ENCODE measurements at regions of chr17 and their contacts with region 1.

Region 1: DNA sequence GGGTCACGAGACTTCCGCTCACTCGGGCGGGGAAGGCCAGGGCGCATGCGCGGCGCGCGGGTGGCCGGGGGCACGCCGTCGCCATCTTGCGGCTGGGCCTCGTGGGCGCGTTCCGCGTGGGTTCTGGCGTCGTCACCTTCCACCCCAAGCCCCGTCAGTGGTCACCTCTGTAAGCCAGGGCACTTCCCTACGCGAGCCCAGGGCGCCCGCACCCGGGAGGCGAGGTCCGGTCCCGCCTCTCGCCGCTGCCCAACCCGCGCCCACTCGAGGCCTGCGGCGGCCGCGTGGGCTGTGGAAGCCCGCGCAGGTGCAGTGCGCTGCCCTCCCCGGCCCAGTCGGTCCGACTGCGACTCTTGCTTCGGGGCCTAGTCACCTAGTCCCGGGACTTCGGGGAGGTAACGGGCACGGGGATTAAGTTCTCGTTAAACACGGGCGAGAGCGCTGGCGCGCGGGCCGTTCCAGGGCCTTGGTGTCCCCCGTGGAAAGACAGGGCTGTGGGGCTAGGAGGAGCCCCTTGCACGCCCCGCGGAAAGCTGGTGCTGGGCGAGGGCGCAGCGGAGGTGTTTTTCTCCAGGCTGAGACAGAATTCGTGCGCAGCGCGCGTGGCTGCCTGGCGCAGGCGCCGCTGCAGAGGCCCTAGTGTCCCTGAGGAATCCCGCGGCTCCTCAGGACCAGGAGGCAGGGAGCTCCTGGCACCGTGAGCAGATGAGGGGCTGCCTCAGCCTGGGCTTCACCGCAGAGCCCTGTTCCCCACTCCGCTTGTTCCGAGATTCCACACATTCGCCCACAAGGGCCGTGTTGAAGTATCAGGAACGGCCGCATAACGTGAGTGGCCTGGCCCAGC is 472 bp upstream of the ARHGDIA start:
- DNase-seq: peak; percentile 91 to 98 (median 95)
- ATAC-seq: peak; percentile 41 to 53
- H3K4me3 Mint-ChIP-seq: peak overlapping the region; percentile 83 to 94 (median 87)
- H3K27ac Mint-ChIP-seq: peak overlapping the region; percentile 88 to 98 (median 95)
- H3K4me1 Mint-ChIP-seq: peaks cover 11 to 46% (median 36%) of the 10 kb centered on the region in 4 donors
- H3K27me3 Mint-ChIP-seq: no peaks in the 10 kb centered on the region

Region 2: DNA sequence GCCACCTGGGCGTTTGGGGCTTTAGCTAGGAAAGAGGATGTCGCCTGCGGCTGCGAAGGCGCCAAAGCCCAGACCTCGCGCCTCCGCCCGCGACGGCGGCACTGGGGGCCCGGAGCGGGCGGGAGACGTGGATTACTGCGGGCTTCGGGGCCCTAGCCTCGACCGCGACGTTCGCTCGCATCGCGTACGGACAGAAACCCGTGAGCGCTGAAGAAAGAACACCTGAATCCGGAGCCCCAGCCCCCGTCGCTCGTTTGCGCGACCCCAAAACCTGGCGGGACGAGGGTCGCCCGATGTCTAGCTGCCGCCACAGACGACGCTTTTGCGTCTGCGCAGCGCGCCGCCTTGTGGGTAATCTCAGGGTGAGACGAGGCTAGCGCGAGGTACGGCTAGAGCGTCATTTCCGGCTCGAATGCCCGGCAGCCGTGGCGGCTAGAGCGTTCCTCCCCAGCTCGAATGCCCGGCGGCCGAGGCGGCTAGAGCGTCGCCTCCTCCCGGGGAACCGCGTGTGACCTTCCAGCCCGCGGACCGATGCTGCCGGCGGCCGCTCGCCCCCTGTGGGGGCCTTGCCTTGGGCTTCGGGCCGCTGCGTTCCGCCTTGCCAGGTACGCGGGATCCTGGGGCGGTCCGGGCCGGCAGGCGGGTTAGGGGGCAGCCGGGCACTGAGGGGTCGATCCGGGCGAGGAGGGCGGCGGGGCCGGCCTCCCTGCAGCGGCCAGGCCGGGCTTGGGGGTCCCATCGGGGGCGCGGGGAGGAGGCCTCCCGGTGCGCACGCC is 168.4 kb before region 1 on chr17 and contains the start of gene MRPL12:
- POLR2A ChIA-PET with region 1: interaction called, 10 read pairs
- DNase-seq: peak; percentile 76 to 92 (median 84)
- ATAC-seq: peak; percentile 89 to 92
- H3K4me3 Mint-ChIP-seq: peak within 1 kb of the TSS; percentile 85 to 92 (median 90)
- H3K27ac Mint-ChIP-seq: peak within 1 kb of the TSS; percentile 78 to 97 (median 95)
- H3K4me1 Mint-ChIP-seq: peaks cover 7 to 44% (median 30%) of the 10 kb centered on the region in 4 donors
- H3K27me3 Mint-ChIP-seq: no peaks in the 10 kb centered on the region
- polyA plus RNA-seq, gene MRPL12: 48.0 to 60.2 (median 48.0) TPM

Region 3: GRCh38 chr17:81860756-81861518 is 10.7 kb before region 1 on chr17:
- POLR2A ChIA-PET with region 1: interaction called, 45 read pairs
- DNase-seq: peak; percentile 98 to 100 (median 99)
- ATAC-seq: peak; percentile 84 to 85
- H3K4me3 Mint-ChIP-seq: peak overlapping the region; percentile 81 to 94 (median 92)
- H3K27ac Mint-ChIP-seq: peak overlapping the region; percentile 92 to 98 (median 96)
- H3K4me1 Mint-ChIP-seq: peaks cover 15 to 67% (median 34%) of the 10 kb centered on the region in 4 donors
- H3K27me3 Mint-ChIP-seq: peaks cover 0 to 3% (median 0%) of the 10 kb centered on the region in 5 donors

Region 4: GRCh38 chr17:81890447-81891299 is 19.1 kb after region 1 on chr17:
- POLR2A ChIA-PET with region 1: interaction called, 71 read pairs
- DNase-seq: no peak
- ATAC-seq: no peak
- H3K4me3 Mint-ChIP-seq: peak overlapping the region; percentile 80 to 93 (median 85)
- H3K27ac Mint-ChIP-seq: peak overlapping the region; percentile 66 to 97 (median 96)
- H3K4me1 Mint-ChIP-seq: peaks cover 13 to 36% (median 24%) of the 10 kb centered on the region in 4 donors
- H3K27me3 Mint-ChIP-seq: no peaks in the 10 kb centered on the region

Region 5: GRCh38 chr17:81917565-81918332 is 46.1 kb after region 1 on chr17 and contains the start of gene SIRT7:
- POLR2A ChIA-PET with region 1: interaction called, 35 read pairs
- DNase-seq: peak; percentile 73 to 90 (median 82)
- ATAC-seq: peak; percentile 91
- H3K4me3 Mint-ChIP-seq: peak within 1 kb of the TSS; percentile 82 to 94 (median 90)
- H3K27ac Mint-ChIP-seq: peak within 1 kb of the TSS; percentile 55 to 93 (median 86)
- H3K4me1 Mint-ChIP-seq: peaks cover 14 to 40% (median 29%) of the 10 kb centered on the region in 4 donors
- H3K27me3 Mint-ChIP-seq: no peaks in the 10 kb centered on the region
- polyA plus RNA-seq, gene SIRT7: 21.3 to 30.6 (median 25.6) TPM